ENCODE measurements at regions of chr7 and their contacts with region 1.

Region 1: DNA sequence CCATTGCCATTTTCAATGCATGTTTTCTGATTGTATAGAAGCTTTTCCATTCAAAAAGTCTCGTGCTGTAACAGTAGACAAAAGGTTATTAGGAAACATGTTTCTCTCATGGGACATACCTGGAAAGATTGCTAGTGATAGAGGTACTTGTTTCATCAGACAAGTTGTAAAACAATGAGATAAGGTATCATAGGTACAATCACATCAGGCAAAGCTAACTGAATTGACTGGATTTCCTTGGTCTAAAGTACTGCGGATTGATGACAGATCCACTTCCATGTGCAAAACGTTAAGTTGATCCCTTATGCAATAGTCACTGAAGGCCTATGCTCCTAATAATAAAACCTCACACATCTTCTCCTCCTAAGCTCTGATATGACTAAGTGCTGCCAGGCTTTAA is 6.5 kb upstream of the RNF32 start:
- DNase-seq: no peak
- H3K4me3 ChIP-seq: no peak overlapping the region
- H3K27ac ChIP-seq: no peak overlapping the region
- H3K4me1 ChIP-seq: no peaks in the 10 kb centered on the region
- H3K27me3 ChIP-seq: peaks cover 10% of the 10 kb centered on the region; the same call in 1 of the 2 replicates
- CTCF ChIP-seq: no peak

Region 2: DNA sequence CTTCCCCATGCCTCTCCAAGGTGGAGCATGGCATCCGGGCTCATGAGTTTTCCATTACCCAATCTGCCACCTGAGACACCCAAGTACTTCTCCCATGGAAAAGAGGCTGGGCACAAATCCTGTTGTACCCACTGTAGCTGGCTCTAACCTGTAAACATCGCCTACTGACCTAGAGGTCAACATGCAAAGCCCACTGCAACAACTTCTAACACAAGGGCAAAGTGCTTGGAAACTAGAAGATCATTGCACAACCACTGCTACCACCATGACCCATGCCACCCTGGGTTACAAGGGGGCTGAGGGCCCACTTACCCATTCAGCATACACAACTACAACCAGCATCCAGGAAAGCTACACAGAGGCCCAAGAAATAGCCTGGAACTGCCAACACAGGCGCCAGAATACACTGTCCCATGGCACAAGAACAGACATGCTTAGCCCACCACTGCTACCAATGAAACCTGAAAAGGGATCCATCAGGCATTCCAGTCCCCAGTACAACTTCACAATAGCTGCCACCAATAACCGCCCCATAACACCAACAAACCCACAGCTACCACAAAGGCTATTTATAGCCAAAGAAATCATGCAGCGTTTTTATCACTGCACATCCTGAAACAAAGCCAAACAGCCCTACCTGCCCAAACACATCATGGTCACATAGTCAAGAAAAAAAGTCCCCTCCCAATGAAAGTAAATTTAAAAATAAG is 69.8 kb after region 1 on chr7:
- CTCF ChIA-PET with region 1: interaction called, 16 read pairs
- POLR2A ChIA-PET with region 1: interaction called, 5 read pairs
- intact Hi-C with region 1: no loop called
- DNase-seq: no peak
- H3K4me3 ChIP-seq: no peak overlapping the region
- H3K27ac ChIP-seq: no peak overlapping the region
- H3K4me1 ChIP-seq: no peaks in the 10 kb centered on the region
- H3K27me3 ChIP-seq: no peaks in the 10 kb centered on the region
- CTCF ChIP-seq: no peak

Region 3: DNA sequence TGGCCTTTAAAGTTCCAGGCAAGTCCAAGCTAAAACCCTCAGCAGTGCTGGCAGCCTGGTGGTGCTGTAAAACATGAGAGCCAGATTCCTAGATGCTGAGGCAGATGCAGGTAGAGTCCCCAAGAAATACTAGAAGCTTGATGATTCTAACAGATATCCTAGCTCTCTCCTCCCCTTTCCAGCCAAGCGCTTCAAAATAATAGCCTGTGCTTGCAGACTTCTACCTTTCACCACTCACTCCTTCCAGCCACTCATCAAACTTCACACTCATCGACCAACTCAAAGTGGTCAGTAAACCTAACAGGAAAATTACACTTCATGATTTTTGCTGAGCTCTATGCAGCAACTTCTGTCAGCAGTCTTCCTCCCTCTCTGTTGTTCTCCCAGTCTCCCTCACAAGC is 208.6 kb after region 1 on chr7:
- CTCF ChIA-PET with region 1: no interaction called
- POLR2A ChIA-PET with region 1: no interaction called
- intact Hi-C with region 1: no loop called
- DNase-seq: no peak
- H3K4me3 ChIP-seq: no peak overlapping the region
- H3K27ac ChIP-seq: no peak overlapping the region
- H3K4me1 ChIP-seq: no peaks in the 10 kb centered on the region
- H3K27me3 ChIP-seq: no peaks in the 10 kb centered on the region
- CTCF ChIP-seq: no peak